ENCODE measurements at regions of chr1 and their contacts with region 1.

Region 1: GRCh38 chr1:96236156-96236739 is 485.3 kb upstream of the PTBP2 start:
- DNase-seq: peak; percentile 70
- H3K4me3 Mint-ChIP-seq: no peak overlapping the region
- H3K27ac Mint-ChIP-seq: no peak overlapping the region
- H3K4me1 Mint-ChIP-seq: peaks cover 11% of the 10 kb centered on the region
- H3K27me3 Mint-ChIP-seq: no peaks in the 10 kb centered on the region
- CTCF ChIP-seq: peak; percentile 63

Region 2: DNA sequence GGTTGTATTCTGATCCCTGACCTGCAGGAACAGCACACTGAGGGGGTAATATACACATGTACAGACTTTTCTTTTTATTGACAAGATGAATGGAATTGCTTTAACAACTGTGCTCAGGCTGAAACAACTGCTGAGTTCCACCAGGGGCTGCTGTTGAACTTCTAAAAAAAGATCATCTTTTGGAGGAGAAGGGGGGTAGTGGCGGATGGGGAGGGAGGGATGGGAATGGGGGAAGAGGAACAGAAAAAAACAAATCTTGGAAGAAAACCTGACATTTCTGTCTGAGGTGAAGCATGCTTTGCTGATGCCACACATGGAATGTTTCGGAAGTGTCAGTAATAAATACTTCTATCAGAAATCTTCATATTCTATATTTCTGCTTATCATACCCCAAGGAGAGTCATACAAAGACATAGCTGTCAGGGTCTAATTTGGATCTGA is 927.2 kb before region 1 on chr1:
- CTCF ChIA-PET with region 1: no interaction called
- POLR2A ChIA-PET with region 1: no interaction called
- intact Hi-C with region 1: loop called (anchors 10 kb)
- DNase-seq: peak; percentile 47
- H3K4me3 Mint-ChIP-seq: no peak overlapping the region
- H3K27ac Mint-ChIP-seq: no peak overlapping the region
- H3K4me1 Mint-ChIP-seq: no peaks in the 10 kb centered on the region
- H3K27me3 Mint-ChIP-seq: peaks cover 31% of the 10 kb centered on the region
- CTCF ChIP-seq: peak; percentile 58

Region 3: GRCh38 chr1:96487394-96487793 is 251.1 kb after region 1 on chr1:
- CTCF ChIA-PET with region 1: interaction called, 10 read pairs
- POLR2A ChIA-PET with region 1: no interaction called
- intact Hi-C with region 1: no loop called
- DNase-seq: peak; percentile 68
- H3K4me3 Mint-ChIP-seq: peak overlapping the region; percentile 38
- H3K27ac Mint-ChIP-seq: peak overlapping the region; percentile 79
- H3K4me1 Mint-ChIP-seq: peaks cover 34% of the 10 kb centered on the region
- H3K27me3 Mint-ChIP-seq: no peaks in the 10 kb centered on the region
- CTCF ChIP-seq: no peak

Region 4: DNA sequence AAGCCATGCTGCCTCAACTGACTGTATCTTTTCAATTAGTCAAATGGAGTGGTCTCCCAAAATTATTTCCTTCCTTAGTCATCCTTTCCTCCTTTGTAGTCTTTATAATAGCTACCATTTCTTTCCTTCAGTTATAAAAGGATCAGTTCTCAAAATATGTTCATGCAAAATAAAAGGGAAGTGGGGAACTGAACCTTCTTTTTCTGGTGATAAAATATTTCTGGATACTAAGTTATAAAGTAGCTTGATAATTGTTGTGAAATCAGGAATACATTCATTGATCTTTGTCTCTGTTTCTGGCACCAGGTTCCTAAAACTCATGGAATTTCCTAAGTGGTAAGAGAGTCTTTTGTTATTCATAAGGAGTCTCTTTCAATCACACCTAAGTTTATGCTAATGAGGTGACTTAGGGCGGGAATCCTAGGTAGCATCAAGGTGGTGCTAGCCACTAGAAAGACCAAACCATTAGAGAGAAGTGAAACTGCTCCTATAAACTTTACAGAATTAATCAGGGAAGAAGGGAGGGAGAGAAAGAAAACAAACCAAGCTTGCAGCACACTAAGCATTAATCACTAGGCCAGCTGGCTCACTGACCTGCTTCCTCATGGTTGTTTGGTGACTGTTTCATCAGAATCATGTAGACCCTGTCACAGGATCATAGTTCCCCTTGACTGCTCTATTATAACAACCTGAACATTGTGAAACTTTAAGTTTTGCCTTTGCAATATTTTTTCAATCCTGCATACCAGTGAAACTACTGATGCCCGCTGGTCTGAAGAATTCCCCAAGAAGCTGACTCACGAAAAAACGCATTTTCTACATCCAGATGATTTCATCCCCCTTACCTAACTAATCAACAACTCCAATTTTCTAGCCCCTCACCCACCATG is 323.7 kb after region 1 on chr1:
- CTCF ChIA-PET with region 1: no interaction called
- POLR2A ChIA-PET with region 1: no interaction called
- intact Hi-C with region 1: loop called (anchors 10 kb)
- DNase-seq: peak; percentile 83
- H3K4me3 Mint-ChIP-seq: peak overlapping the region; percentile 51
- H3K27ac Mint-ChIP-seq: peak overlapping the region; percentile 92
- H3K4me1 Mint-ChIP-seq: peaks cover 17% of the 10 kb centered on the region
- H3K27me3 Mint-ChIP-seq: no peaks in the 10 kb centered on the region
- CTCF ChIP-seq: no peak

Region 5: DNA sequence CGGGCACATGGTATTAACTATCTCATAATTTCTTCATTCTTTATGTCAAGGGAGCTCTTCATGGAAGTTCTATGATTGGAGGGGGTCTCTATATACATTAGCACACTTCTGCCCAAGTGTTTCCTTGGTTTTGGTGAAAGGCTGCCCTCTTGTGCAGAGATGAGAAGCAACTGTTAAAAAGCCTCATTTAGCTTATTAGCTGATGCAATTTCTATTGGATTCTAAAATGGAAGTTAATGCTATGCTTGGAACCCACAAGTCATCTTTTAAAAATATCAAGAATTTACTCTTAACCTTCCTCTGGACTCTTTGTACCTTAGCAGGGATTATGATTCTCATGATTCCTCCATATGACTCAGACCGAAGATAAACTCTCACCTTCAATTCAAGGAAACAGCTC is 814.3 kb after region 1 on chr1:
- CTCF ChIA-PET with region 1: interaction called, 3 read pairs
- POLR2A ChIA-PET with region 1: no interaction called
- intact Hi-C with region 1: loop called (anchors 2 kb)
- DNase-seq: peak; percentile 43
- H3K4me3 Mint-ChIP-seq: no peak overlapping the region
- H3K27ac Mint-ChIP-seq: no peak overlapping the region
- H3K4me1 Mint-ChIP-seq: peaks cover 11% of the 10 kb centered on the region
- H3K27me3 Mint-ChIP-seq: no peaks in the 10 kb centered on the region
- CTCF ChIP-seq: peak; percentile 31

Measured in MCF 10A (cell line).